AG04450 (cell line): ENCODE measurements at regions of chr5 and their contacts with region 1.

Region 1: DNA sequence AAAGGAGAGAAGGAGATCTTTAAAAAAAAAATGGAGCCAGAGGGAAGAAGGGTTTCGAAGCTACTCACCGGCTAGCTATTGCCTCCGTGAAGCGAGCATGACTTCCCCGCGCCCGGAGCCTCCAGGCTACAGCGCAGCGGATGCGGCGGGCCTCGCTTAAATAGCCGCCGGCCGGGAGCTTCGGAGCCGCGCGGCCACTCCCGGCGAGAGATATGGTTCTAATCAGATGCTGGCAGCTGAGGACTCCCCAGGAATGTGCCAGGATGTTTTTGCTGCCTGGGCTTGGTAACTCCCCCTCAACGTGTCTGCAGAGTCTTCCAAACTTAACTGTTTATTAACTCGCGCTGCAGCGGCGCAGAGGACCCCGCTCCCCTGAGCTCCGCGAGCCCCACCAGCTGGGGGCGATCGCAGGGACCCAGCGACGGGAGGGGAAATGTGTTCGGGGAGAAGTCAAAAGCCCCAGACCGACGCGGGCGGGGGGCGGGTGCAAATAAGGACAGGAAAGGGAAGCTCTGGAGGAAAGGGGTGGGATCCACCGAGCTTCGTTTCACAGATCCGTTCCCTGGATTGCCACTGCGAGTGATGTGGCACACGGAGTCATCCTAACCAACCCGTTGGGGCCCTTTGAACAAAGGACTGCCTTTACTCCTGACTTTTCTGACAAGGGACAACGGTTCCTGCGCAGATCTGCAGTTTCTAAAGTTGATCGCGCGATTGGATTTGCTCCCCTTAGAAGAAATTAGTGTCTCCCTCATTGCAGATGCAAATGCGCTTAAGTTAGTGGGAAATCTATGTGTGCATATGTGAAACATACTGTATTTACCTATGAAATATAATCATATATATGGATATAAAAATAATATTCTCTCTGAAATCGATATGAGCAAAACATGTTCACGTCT is at the start of gene DAB2:
- DNase-seq: peak; percentile 93
- H3K4me3 ChIP-seq: peak within 1 kb of the TSS; percentile 85
- H3K27ac ChIP-seq: peak within 1 kb of the TSS; percentile 96
- H3K27me3 ChIP-seq: no peaks in the 10 kb centered on the region
- CTCF ChIP-seq: peak; percentile 74
- polyA plus RNA-seq, gene DAB2: 177 and 206 TPM in 2 replicates

Region 2: DNA sequence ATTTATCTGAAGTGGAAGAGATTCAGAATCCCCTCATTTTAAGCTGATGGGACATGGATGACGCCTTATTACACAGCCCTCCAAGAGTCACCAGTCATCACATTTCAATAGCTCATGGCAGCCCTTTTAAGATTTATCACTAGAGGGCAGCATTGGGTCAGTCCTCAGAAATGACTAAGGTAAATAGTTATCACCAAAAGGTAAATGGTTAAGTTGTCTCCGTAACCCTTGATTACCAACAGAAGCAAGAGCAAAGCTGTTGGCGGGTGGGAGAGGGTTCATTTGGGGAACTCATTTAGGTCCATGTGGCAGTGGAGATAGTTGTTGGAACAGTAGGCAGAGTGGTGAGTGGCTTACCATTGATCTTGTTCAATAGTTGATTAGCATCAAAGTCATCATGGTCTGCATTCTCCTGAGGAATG is 48.7 kb before region 1 on chr5:
- CTCF ChIA-PET with region 1: interaction called, 18 read pairs
- POLR2A ChIA-PET with region 1: interaction called, 22 read pairs
- DNase-seq: no peak
- H3K4me3 ChIP-seq: no peak overlapping the region
- H3K27ac ChIP-seq: no peak overlapping the region
- H3K27me3 ChIP-seq: no peaks in the 10 kb centered on the region
- CTCF ChIP-seq: peak; percentile 80

Region 3: DNA sequence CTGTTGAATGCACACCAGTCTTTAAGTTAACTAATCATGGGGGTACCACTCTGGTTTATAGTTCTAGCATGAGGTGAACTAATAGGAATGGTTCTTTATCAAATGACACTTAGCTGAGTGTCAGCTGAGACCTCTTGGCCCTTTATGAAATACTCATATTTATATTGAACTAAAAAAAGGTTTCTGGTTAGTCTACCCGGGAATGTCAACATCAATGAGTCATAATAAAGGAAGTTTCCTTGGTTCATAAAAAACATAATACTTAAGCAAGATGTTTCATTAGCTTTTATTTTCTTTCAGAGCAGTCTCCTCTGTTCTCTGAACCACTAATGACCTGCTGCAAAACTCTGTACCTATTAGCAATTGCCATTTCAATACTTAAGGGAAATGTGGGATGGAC is 13.9 kb before region 1 on chr5:
- CTCF ChIA-PET with region 1: interaction called, 8 read pairs
- POLR2A ChIA-PET with region 1: interaction called, 47 read pairs
- DNase-seq: no peak
- H3K4me3 ChIP-seq: no peak overlapping the region
- H3K27ac ChIP-seq: peak overlapping the region; percentile 58
- H3K27me3 ChIP-seq: no peaks in the 10 kb centered on the region
- CTCF ChIP-seq: no peak

Region 4: GRCh38 chr5:39461026-39461682 is 36.2 kb after region 1 on chr5:
- CTCF ChIA-PET with region 1: interaction called, 16 read pairs
- POLR2A ChIA-PET with region 1: interaction called, 17 read pairs
- DNase-seq: no peak
- H3K4me3 ChIP-seq: no peak overlapping the region
- H3K27ac ChIP-seq: no peak overlapping the region
- H3K27me3 ChIP-seq: no peaks in the 10 kb centered on the region
- CTCF ChIP-seq: no peak

Region 5: GRCh38 chr5:39520232-39520572 is 95.2 kb after region 1 on chr5:
- CTCF ChIA-PET with region 1: interaction called, 15 read pairs
- POLR2A ChIA-PET with region 1: interaction called, 75 read pairs
- DNase-seq: peak; percentile 83
- H3K4me3 ChIP-seq: no peak overlapping the region
- H3K27ac ChIP-seq: no peak overlapping the region
- H3K27me3 ChIP-seq: no peaks in the 10 kb centered on the region
- CTCF ChIP-seq: no peak

Region 6: GRCh38 chr5:39547553-39548154 is 122.7 kb after region 1 on chr5:
- CTCF ChIA-PET with region 1: interaction called, 62 read pairs
- POLR2A ChIA-PET with region 1: interaction called, 23 read pairs
- DNase-seq: peak; percentile 33
- H3K4me3 ChIP-seq: no peak overlapping the region
- H3K27ac ChIP-seq: no peak overlapping the region
- H3K27me3 ChIP-seq: no peaks in the 10 kb centered on the region
- CTCF ChIP-seq: peak; percentile 77